Right ventricle myocardium inferior (tissue), 1 donor: ENCODE measurements at regions of chr18 and their contacts with region 1.

Region 1: GRCh38 chr18:2894131-2894840 is 47.5 kb downstream of the EMILIN2 start:
- DNase-seq: peak; percentile 80
- ATAC-seq: peak; percentile 92

Region 2: DNA sequence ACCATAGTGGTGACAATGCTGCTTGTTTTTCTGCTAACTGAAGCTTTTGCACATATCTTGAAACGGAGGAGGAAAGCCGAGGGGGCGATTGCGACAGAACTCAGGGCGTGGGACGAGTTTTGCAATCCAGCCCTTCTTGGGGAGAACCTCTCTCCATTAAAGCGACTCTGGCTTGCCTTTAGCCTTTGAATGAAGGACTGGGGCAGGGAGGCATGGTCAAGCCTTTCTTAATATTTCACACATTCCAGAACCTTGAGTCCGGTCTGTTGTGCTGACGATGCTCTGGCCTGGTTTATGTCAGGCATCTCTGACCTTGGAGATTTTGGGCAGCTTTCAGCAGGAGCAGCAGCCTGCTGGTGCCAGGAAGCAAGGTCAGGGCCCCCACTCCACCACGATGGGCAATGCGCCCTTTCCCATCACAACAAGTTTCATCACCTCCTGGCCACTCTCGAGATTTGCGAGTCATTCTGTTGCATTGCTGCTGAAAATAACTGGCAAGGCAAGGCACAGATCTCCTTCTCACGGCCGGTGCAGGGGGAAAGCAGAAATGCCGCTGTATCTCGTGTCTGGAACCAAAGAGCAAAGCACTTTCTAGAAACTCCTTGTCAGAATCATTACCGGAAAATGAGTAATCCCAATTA is 36.7 kb before region 1 on chr18:
- intact Hi-C with region 1: loop called (anchors 2 kb)
- DNase-seq: peak; percentile 90
- ATAC-seq: peak; percentile 96

Region 3: DNA sequence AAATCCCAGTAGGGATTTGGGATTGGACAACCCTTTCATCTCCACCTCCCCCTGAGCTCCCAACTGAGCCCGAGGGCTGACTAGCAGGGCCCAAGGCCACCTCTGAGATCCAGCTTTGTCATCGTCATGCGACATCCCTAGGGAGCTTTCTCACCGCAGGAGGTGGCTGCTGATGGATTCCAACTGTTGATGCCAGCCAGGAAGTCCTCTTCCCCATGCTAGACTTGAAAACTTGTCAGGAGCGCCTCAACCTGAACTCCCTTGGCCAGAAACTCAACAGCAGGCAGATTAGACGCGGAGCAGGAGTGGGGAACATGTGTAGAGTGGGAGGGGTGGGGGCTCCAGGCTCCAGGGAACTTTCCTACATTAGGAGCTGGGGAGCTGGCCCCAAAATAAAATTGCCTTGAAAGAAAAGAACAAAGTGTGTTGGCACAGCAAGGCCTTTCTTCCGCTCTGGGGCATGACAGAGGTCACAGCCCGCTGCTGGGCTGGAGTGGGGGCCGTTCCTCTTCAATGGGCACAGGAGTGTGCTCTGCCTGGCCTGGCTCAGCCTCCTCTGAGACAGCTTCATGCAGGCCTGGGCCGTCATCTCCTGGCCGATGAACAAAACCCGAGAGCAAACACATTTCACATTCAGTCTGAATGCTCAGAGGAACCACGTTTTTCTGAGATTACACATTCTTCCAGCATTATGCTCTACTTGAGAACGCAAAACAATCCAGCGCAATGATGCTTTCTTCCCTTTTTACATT is 13.0 kb before region 1 on chr18:
- intact Hi-C with region 1: loop called (anchors 2 kb)
- DNase-seq: peak; percentile 83
- ATAC-seq: peak; percentile 84